ENCODE measurements at regions of chr19 and their contacts with region 1.

Region 1: GRCh38 chr19:11125994-11126685 is 29.4 kb downstream of the SPC24 start:
- DNase-seq: peak; percentile 56 to 87 (median 79)
- ATAC-seq: peak; percentile 72
- H3K4me3 ChIP-seq: no peak overlapping the region
- H3K4me3 Mint-ChIP-seq: no peak overlapping the region
- H3K27ac ChIP-seq: no peak overlapping the region
- H3K27ac Mint-ChIP-seq: no peak overlapping the region
- H3K4me1 ChIP-seq: no peaks in the 10 kb centered on the region
- H3K4me1 Mint-ChIP-seq: peaks cover 4% of the 10 kb centered on the region
- H3K27me3 ChIP-seq: no peaks in the 10 kb centered on the region
- H3K27me3 Mint-ChIP-seq: no peaks in the 10 kb centered on the region
- CTCF ChIP-seq: peak; percentile 76

Region 2: GRCh38 chr19:10615429-10616023 is 510.6 kb before region 1 on chr19:
- CTCF ChIA-PET with region 1: no interaction called
- POLR2A ChIA-PET with region 1: no interaction called
- intact Hi-C with region 1: no loop called
- DNase-seq: peak in 1 of 9 experiments; percentile 43
- ATAC-seq: no peak
- H3K4me3 ChIP-seq: no peak overlapping the region
- H3K4me3 Mint-ChIP-seq: peak overlapping the region; percentile 65
- H3K27ac ChIP-seq: peak overlapping the region in 1 of 2 experiments; percentile 65
- H3K27ac Mint-ChIP-seq: peak overlapping the region; percentile 90
- H3K4me1 ChIP-seq: peaks cover 41% of the 10 kb centered on the region
- H3K4me1 Mint-ChIP-seq: peaks cover 43% of the 10 kb centered on the region
- H3K27me3 ChIP-seq: no peaks in the 10 kb centered on the region
- H3K27me3 Mint-ChIP-seq: no peaks in the 10 kb centered on the region
- CTCF ChIP-seq: no peak

Region 3: DNA sequence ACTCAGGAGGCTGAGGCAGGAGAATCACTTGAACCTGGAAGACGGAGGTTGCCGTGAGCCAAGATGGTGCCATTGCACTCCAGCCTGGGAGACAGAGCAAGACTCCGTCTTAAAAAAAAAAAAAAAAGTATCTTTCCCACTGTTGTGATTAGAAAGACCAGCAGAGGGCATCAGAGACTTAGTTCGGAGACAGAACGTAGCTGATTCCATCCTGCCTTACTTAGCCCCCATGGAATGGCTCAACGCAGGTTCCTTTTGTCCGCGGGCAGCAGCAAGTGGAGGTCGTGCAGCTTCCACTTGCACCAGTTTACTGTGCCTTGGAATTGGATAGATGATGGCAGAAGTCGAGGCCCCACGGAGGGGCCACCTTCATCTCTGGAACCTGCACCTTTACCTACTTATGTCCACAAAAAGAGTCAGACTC is 189.5 kb before region 1 on chr19:
- CTCF ChIA-PET with region 1: interaction called, 6 read pairs
- POLR2A ChIA-PET with region 1: no interaction called
- intact Hi-C with region 1: loop called in 1 of 2 experiments (anchors 2 kb)
- DNase-seq: peak in 5 of 9 experiments; percentile 33 to 76 (median 50)
- ATAC-seq: peak; percentile 79
- H3K4me3 ChIP-seq: no peak overlapping the region
- H3K4me3 Mint-ChIP-seq: no peak overlapping the region
- H3K27ac ChIP-seq: no peak overlapping the region
- H3K27ac Mint-ChIP-seq: no peak overlapping the region
- H3K4me1 ChIP-seq: no peaks in the 10 kb centered on the region
- H3K4me1 Mint-ChIP-seq: peaks cover 8% of the 10 kb centered on the region
- H3K27me3 ChIP-seq: no peaks in the 10 kb centered on the region
- H3K27me3 Mint-ChIP-seq: no peaks in the 10 kb centered on the region
- CTCF ChIP-seq: peak; percentile 60

Region 4: DNA sequence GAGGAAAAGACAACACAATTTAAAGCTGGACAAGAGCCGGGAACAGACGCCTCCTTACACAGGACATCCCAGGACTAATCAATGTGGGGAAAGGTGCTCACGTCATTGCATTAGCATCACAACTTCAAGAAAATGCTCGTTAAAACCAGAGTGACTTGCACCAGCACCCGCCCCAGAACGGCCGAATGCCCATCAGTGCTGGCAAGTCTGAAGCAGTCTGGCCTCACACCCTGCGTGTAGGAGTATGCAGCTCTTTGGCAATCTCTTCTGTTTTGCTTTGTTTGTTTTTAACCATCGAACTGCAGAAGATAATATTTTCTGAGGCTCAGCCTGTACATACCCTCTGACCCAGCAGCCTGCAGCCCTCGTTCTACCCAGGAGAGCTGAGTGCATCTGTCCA is 81.7 kb before region 1 on chr19:
- CTCF ChIA-PET with region 1: interaction called, 17 read pairs
- POLR2A ChIA-PET with region 1: no interaction called
- intact Hi-C with region 1: no loop called
- DNase-seq: no peak
- ATAC-seq: no peak
- H3K4me3 ChIP-seq: no peak overlapping the region
- H3K4me3 Mint-ChIP-seq: no peak overlapping the region
- H3K27ac ChIP-seq: no peak overlapping the region
- H3K27ac Mint-ChIP-seq: no peak overlapping the region
- H3K4me1 ChIP-seq: peaks cover 13% of the 10 kb centered on the region
- H3K4me1 Mint-ChIP-seq: peaks cover 14% of the 10 kb centered on the region
- H3K27me3 ChIP-seq: no peaks in the 10 kb centered on the region
- H3K27me3 Mint-ChIP-seq: no peaks in the 10 kb centered on the region
- CTCF ChIP-seq: no peak

Region 5: DNA sequence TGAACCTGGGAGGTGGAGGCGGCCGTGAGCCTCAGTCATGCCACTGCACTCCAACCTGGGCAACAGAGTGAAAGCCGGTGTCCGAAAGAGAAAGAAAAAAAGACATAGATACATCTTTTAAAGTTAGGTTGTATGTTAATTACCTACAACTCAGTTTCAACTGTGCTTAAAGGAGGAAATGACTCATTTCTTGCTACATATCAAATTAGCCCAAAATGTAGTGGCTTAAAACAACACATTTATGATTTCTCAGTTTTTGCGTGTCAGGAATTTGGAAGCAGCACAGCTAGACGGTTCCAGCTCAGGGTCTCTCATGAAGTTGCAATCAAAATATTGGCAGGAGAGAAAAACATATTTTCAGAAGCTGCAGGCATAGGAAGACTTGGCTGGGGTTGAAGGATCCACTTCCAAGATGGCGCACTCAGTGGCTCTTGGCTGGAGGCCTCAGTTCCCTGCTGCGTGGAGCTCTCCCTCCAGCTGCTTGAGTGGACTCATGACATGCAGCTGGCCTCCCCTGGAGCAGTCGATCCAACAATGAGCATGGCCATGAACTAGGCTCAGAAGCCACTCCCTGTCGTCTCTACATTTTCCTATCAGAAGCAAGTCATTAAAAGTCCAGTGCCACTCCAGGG is 29.8 kb before region 1 on chr19:
- CTCF ChIA-PET with region 1: interaction called, 28 read pairs
- POLR2A ChIA-PET with region 1: no interaction called
- intact Hi-C with region 1: loop called in 1 of 2 experiments (anchors 5 kb)
- DNase-seq: peak in 4 of 9 experiments; percentile 28 to 69 (median 55)
- ATAC-seq: peak; percentile 18
- H3K4me3 ChIP-seq: peak overlapping the region in 1 of 2 experiments; percentile 14
- H3K4me3 Mint-ChIP-seq: peak overlapping the region; percentile 64
- H3K27ac ChIP-seq: peak overlapping the region in 1 of 2 experiments; percentile 88
- H3K27ac Mint-ChIP-seq: peak overlapping the region; percentile 90
- H3K4me1 ChIP-seq: peaks cover 40% of the 10 kb centered on the region
- H3K4me1 Mint-ChIP-seq: peaks cover 43% of the 10 kb centered on the region
- H3K27me3 ChIP-seq: no peaks in the 10 kb centered on the region
- H3K27me3 Mint-ChIP-seq: no peaks in the 10 kb centered on the region
- CTCF ChIP-seq: no peak

Region 6: DNA sequence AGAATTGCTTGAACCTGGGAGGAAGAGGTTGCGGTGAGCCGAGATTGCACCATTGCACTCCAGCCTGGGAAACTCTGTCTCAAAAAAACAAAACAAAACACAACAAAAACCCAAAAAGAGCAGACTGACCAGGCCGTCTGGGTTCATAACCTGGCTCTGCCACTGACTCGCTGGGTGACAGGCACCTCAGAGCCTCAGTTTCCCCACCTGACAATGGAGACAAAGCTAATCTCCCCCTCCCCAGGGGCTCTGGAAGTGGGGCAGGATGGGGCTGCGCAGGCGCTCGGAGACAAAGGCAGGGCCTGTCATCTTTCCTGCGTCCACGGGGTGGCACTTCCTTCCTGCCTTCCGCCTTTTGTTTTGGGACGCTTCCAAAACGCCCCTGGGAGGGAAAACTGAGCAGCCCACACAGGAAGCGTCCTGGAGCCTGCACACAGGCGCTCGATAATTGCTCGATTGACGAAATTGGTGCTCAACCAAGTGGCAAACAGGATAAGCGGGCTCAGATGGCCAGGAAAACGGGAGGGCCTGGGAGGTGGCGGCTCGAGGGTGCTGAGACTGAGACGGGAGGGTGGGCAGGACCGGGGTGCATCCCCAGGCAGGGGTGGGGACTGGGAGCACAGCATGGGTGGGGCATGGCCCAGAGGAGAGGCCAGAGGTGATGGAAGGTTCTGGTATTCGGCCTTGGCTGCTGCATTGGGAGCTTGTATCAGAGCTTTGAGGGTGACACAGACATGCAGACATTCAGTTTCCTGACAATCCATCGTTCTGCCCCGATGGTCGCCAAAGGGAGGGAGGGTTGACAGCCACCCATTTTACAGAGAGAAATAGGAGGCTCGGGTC is 11.6 kb after region 1 on chr19:
- CTCF ChIA-PET with region 1: interaction called, 28 read pairs
- POLR2A ChIA-PET with region 1: no interaction called
- intact Hi-C with region 1: no loop called
- DNase-seq: peak in 8 of 9 experiments; percentile 18 to 80 (median 58)
- ATAC-seq: peak; percentile 82
- H3K4me3 ChIP-seq: peak overlapping the region; percentile 48 to 57
- H3K4me3 Mint-ChIP-seq: peak overlapping the region; percentile 84
- H3K27ac ChIP-seq: no peak overlapping the region
- H3K27ac Mint-ChIP-seq: no peak overlapping the region
- H3K4me1 ChIP-seq: peaks cover 13% of the 10 kb centered on the region
- H3K4me1 Mint-ChIP-seq: peaks cover 10% of the 10 kb centered on the region
- H3K27me3 ChIP-seq: no peaks in the 10 kb centered on the region
- H3K27me3 Mint-ChIP-seq: no peaks in the 10 kb centered on the region
- CTCF ChIP-seq: peak; percentile 55

Region 7: GRCh38 chr19:11169896-11170678 is 43.9 kb after region 1 on chr19:
- CTCF ChIA-PET with region 1: interaction called, 12 read pairs
- POLR2A ChIA-PET with region 1: no interaction called
- intact Hi-C with region 1: no loop called
- DNase-seq: no peak
- ATAC-seq: no peak
- H3K4me3 ChIP-seq: no peak overlapping the region
- H3K4me3 Mint-ChIP-seq: no peak overlapping the region
- H3K27ac ChIP-seq: no peak overlapping the region
- H3K27ac Mint-ChIP-seq: no peak overlapping the region
- H3K4me1 ChIP-seq: no peaks in the 10 kb centered on the region
- H3K4me1 Mint-ChIP-seq: no peaks in the 10 kb centered on the region
- H3K27me3 ChIP-seq: no peaks in the 10 kb centered on the region
- H3K27me3 Mint-ChIP-seq: peaks cover 2% of the 10 kb centered on the region
- CTCF ChIP-seq: no peak

Region 8: GRCh38 chr19:11247934-11248333 is 121.8 kb after region 1 on chr19:
- CTCF ChIA-PET with region 1: no interaction called
- POLR2A ChIA-PET with region 1: no interaction called
- intact Hi-C with region 1: no loop called
- DNase-seq: no peak
- ATAC-seq: no peak
- H3K4me3 ChIP-seq: no peak overlapping the region
- H3K4me3 Mint-ChIP-seq: no peak overlapping the region
- H3K27ac ChIP-seq: no peak overlapping the region
- H3K27ac Mint-ChIP-seq: no peak overlapping the region
- H3K4me1 ChIP-seq: no peaks in the 10 kb centered on the region
- H3K4me1 Mint-ChIP-seq: peaks cover 5% of the 10 kb centered on the region
- H3K27me3 ChIP-seq: peaks cover 0 to 3% of the 10 kb centered on the region in 2 experiments
- H3K27me3 Mint-ChIP-seq: peaks cover 21% of the 10 kb centered on the region
- CTCF ChIP-seq: no peak

Region 9: GRCh38 chr19:11482384-11483050 is 356.4 kb after region 1 on chr19:
- CTCF ChIA-PET with region 1: interaction called, 4 read pairs
- POLR2A ChIA-PET with region 1: no interaction called
- intact Hi-C with region 1: loop called in 1 of 2 experiments (anchors 10 kb)
- DNase-seq: peak; percentile 75 to 95 (median 83)
- ATAC-seq: peak; percentile 74
- H3K4me3 ChIP-seq: peak overlapping the region; percentile 17 to 27
- H3K4me3 Mint-ChIP-seq: peak overlapping the region; percentile 60
- H3K27ac ChIP-seq: no peak overlapping the region
- H3K27ac Mint-ChIP-seq: no peak overlapping the region
- H3K4me1 ChIP-seq: peaks cover 22% of the 10 kb centered on the region
- H3K4me1 Mint-ChIP-seq: peaks cover 22% of the 10 kb centered on the region
- H3K27me3 ChIP-seq: peaks cover 18 to 26% of the 10 kb centered on the region in 2 experiments
- H3K27me3 Mint-ChIP-seq: peaks cover 28% of the 10 kb centered on the region
- CTCF ChIP-seq: peak; percentile 88

Measured in CD8-positive, alpha-beta T cell (primary cell).